OCI-LY7 (cell line): ENCODE measurements at regions of chr1 and their contacts with region 1.

Region 1: GRCh38 chr1:23057301-23057700 is 38.0 kb downstream of the KDM1A start:
- DNase-seq: no peak
- H3K4me3 ChIP-seq: no peak overlapping the region
- H3K27ac ChIP-seq: no peak overlapping the region
- H3K4me1 ChIP-seq: no peaks in the 10 kb centered on the region
- CTCF ChIP-seq: no peak

Region 2: DNA sequence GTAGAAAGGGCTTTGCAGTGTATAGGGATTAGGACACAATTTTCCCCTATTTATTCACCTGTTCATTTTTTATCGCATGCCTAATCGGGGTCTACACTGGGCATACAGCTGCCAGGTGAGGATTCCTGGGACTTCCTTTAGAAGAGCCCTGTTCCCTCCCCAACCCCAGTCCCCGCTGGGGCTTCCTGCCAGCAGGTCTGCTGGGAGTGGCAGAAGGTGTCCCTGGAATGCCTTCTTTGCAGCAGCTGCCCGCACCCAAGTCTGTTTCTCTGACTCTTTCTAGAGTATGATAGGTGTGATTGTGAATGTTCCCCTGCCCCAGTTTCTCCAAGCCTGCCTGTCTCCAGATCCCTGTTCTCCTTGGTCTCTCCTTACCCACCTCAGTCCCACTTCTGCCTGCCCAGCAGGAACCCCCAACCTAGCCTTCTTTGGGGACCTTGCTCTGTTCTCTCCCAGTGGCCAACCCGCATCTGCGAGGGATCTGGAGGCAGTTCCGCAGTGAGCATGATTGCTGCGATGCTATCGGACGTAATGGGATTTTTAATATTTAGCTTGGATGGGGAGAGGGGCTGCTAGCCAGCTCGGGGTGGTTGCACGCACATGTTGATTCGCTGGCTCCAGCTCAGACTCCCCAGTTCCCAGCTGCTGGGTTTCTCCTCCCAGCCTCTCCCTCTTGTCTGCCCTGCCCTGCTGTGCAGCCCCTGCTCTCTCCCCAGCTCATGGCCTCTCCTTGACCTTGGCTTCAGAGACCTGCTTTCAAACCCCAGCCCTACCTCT is 266.9 kb before region 1 on chr1:
- CTCF ChIA-PET with region 1: no interaction called
- POLR2A ChIA-PET with region 1: no interaction called
- intact Hi-C with region 1: no loop called
- DNase-seq: no peak
- H3K4me3 ChIP-seq: no peak overlapping the region
- H3K27ac ChIP-seq: no peak overlapping the region
- H3K4me1 ChIP-seq: no peaks in the 10 kb centered on the region
- CTCF ChIP-seq: no peak

Region 3: GRCh38 chr1:23044035-23044434 is 13.3 kb before region 1 on chr1:
- CTCF ChIA-PET with region 1: no interaction called
- POLR2A ChIA-PET with region 1: interaction called, 10 read pairs
- intact Hi-C with region 1: no loop called
- DNase-seq: no peak
- H3K4me3 ChIP-seq: no peak overlapping the region
- H3K27ac ChIP-seq: no peak overlapping the region
- H3K4me1 ChIP-seq: no peaks in the 10 kb centered on the region
- CTCF ChIP-seq: no peak

Region 4: DNA sequence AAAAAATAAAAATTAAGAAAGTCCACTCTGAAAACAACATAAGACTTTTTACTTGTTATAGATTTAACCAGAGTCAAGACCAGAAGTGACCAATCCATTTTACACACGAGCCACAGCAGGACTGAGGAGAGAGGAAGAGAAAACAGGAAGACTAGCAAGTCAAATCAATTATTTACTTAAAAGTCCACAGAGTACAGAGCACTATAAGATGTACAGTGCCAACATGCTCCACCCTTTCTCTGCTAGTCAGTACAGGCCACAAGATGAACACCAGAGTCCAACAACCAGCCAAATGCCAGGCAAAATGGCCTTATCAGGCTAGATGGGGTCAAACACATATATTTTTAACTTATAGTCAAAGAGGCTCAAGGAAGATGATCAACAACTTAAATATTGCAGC is 91.8 kb after region 1 on chr1:
- CTCF ChIA-PET with region 1: no interaction called
- POLR2A ChIA-PET with region 1: no interaction called
- intact Hi-C with region 1: no loop called
- DNase-seq: no peak
- H3K4me3 ChIP-seq: no peak overlapping the region
- H3K27ac ChIP-seq: no peak overlapping the region
- H3K4me1 ChIP-seq: peaks cover 5% of the 10 kb centered on the region
- CTCF ChIP-seq: no peak